ENCODE measurements at regions of chr21 and their contacts with region 1.

Region 1: DNA sequence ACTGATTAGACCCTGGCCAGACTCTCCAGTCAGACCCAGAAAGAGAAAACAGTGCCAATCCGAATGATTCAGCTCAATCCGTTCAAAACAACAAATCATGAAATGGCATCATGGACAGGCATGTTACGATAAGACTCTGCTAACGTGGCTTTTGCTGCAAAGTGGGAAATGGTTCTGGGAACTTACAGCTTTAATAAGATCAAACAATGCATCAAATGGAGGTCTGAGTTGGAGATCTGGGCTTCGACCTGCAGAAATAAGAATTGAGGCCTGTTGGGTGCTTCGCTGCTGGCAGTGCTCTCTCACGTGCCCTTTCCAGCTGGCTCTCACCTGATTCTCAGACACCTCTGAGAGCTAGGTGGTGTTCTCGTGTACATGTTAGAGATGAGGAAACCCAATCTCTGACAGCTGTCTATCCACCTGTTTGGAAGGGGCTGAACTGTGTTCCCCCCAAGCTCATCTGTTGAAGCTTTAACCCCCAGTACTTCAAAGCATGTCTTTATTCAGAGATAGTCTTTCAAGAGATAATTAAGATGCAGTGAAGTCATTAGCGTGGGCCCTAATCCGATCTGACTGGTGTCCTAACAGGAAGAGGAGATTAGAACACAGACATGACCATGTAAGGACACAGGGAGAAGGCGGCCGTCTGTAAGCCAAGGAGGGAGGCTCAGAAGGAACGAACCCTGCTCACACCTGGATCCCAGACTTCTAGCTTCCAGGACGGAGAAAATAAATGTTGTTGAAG is 45.5 kb upstream of the ETS2 start:
- DNase-seq: no peak
- H3K4me3 ChIP-seq: no peak overlapping the region
- H3K27ac ChIP-seq: no peak overlapping the region
- H3K4me1 ChIP-seq: peaks cover 9% of the 10 kb centered on the region
- H3K27me3 ChIP-seq: peaks cover 0 to under 1% of the 10 kb centered on the region in 2 experiments
- CTCF ChIP-seq: no peak
- POLR2A ChIP-seq: no peak

Region 2: DNA sequence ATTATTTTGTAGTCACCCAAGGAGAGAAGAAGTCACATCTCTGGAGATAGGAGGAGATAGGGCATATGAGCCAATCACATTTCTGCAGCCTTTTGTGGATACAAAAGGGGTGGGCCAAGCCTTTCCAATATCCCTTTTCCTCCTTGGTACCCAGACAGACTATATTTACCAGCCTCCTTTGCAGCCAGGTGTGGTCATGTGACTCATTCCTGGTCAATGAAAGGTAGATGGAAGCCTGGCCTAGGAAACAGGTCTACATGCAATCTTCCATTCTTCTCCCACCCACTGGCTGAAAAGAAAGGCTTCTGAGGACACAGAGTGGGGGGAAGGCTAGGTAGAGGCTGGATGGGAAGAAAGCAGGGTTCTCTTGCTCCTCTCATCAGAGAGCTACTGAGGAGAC is 203.8 kb before region 1 on chr21:
- CTCF ChIA-PET with region 1: no interaction called
- POLR2A ChIA-PET with region 1: no interaction called
- dilution Hi-C with region 1: no loop called
- intact Hi-C with region 1: no loop called
- DNase-seq: no peak
- H3K4me3 ChIP-seq: no peak overlapping the region
- H3K27ac ChIP-seq: no peak overlapping the region
- H3K4me1 ChIP-seq: no peaks in the 10 kb centered on the region
- H3K27me3 ChIP-seq: peaks cover 2 to 13% of the 10 kb centered on the region in 2 experiments
- CTCF ChIP-seq: no peak
- POLR2A ChIP-seq: no peak

Region 3: GRCh38 chr21:38773099-38774061 is 13.2 kb after region 1 on chr21:
- CTCF ChIA-PET with region 1: interaction called, 13 read pairs
- POLR2A ChIA-PET with region 1: interaction called, 9 read pairs
- dilution Hi-C with region 1: no loop called
- intact Hi-C with region 1: no loop called
- DNase-seq: peak; percentile 91
- H3K4me3 ChIP-seq: no peak overlapping the region
- H3K27ac ChIP-seq: peak overlapping the region; percentile 45
- H3K4me1 ChIP-seq: peaks cover 17% of the 10 kb centered on the region
- H3K27me3 ChIP-seq: no peaks in the 10 kb centered on the region
- CTCF ChIP-seq: no peak
- POLR2A ChIP-seq: no peak